GM12878 (cell line): ENCODE measurements at regions of chr2 and their contacts with region 1.

Region 1: GRCh38 chr2:187453078-187453641 is 5.1 kb upstream of the CALCRL start:
- DNase-seq: no peak
- ATAC-seq: 0 out of 3 replicates have a peak, but pooled peaks have one; percentile 11
- H3K4me3 ChIP-seq: no peak overlapping the region
- H3K27ac ChIP-seq: no peak overlapping the region
- H3K4me1 ChIP-seq: no peaks in the 10 kb centered on the region
- H3K27me3 ChIP-seq: no peaks in the 10 kb centered on the region
- CTCF ChIP-seq: peak; percentile 8 to 67 (median 27); a peak in 4 of 6 replicates
- EP300 ChIP-seq: no peak
- POLR2A ChIP-seq: no peak
- RAD21 ChIP-seq: peak; percentile 81

Region 2: DNA sequence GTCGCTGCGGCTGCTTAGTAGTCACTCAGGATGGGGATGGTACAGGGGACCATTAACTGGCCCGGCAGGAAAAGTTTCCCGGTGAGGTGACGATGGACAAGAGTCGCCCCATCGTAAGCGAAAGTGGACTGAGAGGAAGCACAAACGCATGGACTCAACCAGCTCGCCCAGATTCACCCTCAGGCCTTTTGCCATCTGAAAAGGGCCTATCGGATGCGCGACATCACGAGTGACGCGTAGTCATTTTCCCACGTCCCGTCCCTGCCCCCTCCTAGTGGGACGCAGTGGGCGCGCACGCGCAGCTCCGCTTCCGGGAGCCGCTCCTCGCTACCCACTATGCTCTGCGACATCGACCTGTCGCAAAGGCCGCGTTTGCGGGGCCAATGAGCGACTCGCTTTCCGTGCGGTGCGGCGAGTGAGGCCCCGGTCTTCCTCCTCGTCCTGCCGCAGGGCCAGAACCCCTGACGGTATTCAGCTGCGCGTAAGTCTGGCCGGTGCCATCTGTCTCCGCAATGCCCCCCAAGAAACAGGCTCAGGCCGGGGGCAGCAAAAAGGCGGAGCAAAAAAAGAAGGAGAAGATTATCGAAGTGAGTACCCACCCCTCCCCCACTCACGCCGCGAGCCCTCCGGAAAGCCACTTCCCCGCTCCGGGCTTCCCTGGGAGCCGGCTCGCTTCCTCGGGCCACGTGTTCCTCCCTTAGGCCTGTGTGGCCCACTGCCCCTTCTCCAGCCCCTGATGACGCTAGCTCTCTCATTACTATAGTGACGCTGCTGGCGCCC is 967.1 kb before region 1 on chr2 and contains the start of gene ZC3H15:
- CTCF ChIA-PET with region 1: no interaction called
- POLR2A ChIA-PET with region 1: no interaction called
- RAD21 ChIA-PET with region 1: interaction called, 3 read pairs
- SMC1A ChIA-PET with region 1: no interaction called
- in situ Hi-C with region 1: loop called (anchors 25 kb)
- intact Hi-C with region 1: no loop called
- DNase-seq: peak; percentile 97
- ATAC-seq: peak; percentile 79
- H3K4me3 ChIP-seq: peak within 1 kb of the TSS; percentile 86
- H3K27ac ChIP-seq: peak within 1 kb of the TSS; percentile 97
- H3K4me1 ChIP-seq: 0 out of 2 replicates have a peak, but pooled peaks cover 4% of the 10 kb centered on the region
- H3K27me3 ChIP-seq: no peaks in the 10 kb centered on the region
- CTCF ChIP-seq: no peak
- EP300 ChIP-seq: no peak
- POLR2A ChIP-seq: peak; percentile 97
- RAD21 ChIP-seq: no peak
- polyA plus RNA-seq, gene ZC3H15: 115 to 122 TPM

Region 3: GRCh38 chr2:186903216-186903615 is 549.9 kb before region 1 on chr2:
- CTCF ChIA-PET with region 1: interaction called, 20 read pairs
- POLR2A ChIA-PET with region 1: no interaction called
- RAD21 ChIA-PET with region 1: interaction called, 18 read pairs
- SMC1A ChIA-PET with region 1: interaction called, 25 read pairs
- in situ Hi-C with region 1: no loop called
- intact Hi-C with region 1: loop called (anchors 2 kb)
- DNase-seq: no peak
- ATAC-seq: no peak
- H3K4me3 ChIP-seq: no peak overlapping the region
- H3K27ac ChIP-seq: no peak overlapping the region
- H3K4me1 ChIP-seq: no peaks in the 10 kb centered on the region
- H3K27me3 ChIP-seq: no peaks in the 10 kb centered on the region
- CTCF ChIP-seq: peak in 2 of 3 experiments; percentile 8 to 34; a peak in 2 of 6 replicates
- EP300 ChIP-seq: no peak
- POLR2A ChIP-seq: no peak
- RAD21 ChIP-seq: peak; percentile 45

Region 4: GRCh38 chr2:187138265-187138664 is 314.9 kb before region 1 on chr2:
- CTCF ChIA-PET with region 1: interaction called, 23 read pairs
- POLR2A ChIA-PET with region 1: interaction called, 3 read pairs
- RAD21 ChIA-PET with region 1: interaction called, 35 read pairs
- SMC1A ChIA-PET with region 1: interaction called, 24 read pairs
- in situ Hi-C with region 1: loop called (anchors 10 kb)
- intact Hi-C with region 1: loop called (anchors 1 kb)
- DNase-seq: no peak
- ATAC-seq: peak; percentile 91
- H3K4me3 ChIP-seq: no peak overlapping the region
- H3K27ac ChIP-seq: no peak overlapping the region
- H3K4me1 ChIP-seq: no peaks in the 10 kb centered on the region
- H3K27me3 ChIP-seq: no peaks in the 10 kb centered on the region
- CTCF ChIP-seq: peak; percentile 54 to 67 (median 65)
- EP300 ChIP-seq: no peak
- POLR2A ChIP-seq: no peak
- RAD21 ChIP-seq: peak; percentile 77

Region 5: GRCh38 chr2:187299122-187299906 is 153.8 kb before region 1 on chr2:
- CTCF ChIA-PET with region 1: interaction called, 31 read pairs
- POLR2A ChIA-PET with region 1: interaction called, 3 read pairs
- RAD21 ChIA-PET with region 1: interaction called, 16 read pairs
- SMC1A ChIA-PET with region 1: interaction called, 10 read pairs
- in situ Hi-C with region 1: no loop called
- intact Hi-C with region 1: loop called (anchors 1 kb)
- DNase-seq: no peak
- ATAC-seq: peak; percentile 79
- H3K4me3 ChIP-seq: no peak overlapping the region
- H3K27ac ChIP-seq: no peak overlapping the region
- H3K4me1 ChIP-seq: no peaks in the 10 kb centered on the region
- H3K27me3 ChIP-seq: no peaks in the 10 kb centered on the region
- CTCF ChIP-seq: peak; percentile 32 to 49 (median 38); a peak in 4 of 6 replicates
- EP300 ChIP-seq: no peak
- POLR2A ChIP-seq: no peak
- RAD21 ChIP-seq: peak; percentile 69

Region 6: DNA sequence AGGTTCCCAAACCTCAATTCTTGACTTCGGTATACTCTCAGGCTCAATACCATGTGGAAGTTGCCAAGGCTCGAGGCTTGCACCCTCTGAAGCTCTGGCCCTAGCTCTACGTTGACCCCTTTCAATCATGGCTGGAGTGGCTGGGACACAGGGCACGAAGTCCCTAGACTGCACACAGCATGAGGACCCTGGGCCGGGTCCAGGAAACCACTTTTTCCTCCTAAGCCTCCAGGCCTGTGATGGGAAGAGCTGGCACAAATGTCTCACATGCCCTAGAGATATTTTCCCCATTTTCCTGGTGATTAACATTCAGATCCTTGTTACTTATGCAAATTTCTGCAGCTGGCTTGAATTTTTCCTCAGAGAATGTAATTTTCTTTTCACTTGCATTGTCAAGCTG is 40.0 kb after region 1 on chr2:
- CTCF ChIA-PET with region 1: no interaction called
- POLR2A ChIA-PET with region 1: no interaction called
- RAD21 ChIA-PET with region 1: no interaction called
- SMC1A ChIA-PET with region 1: no interaction called
- in situ Hi-C with region 1: no loop called
- intact Hi-C with region 1: no loop called
- DNase-seq: no peak
- ATAC-seq: no peak
- H3K4me3 ChIP-seq: no peak overlapping the region
- H3K27ac ChIP-seq: no peak overlapping the region
- H3K4me1 ChIP-seq: no peaks in the 10 kb centered on the region
- H3K27me3 ChIP-seq: no peaks in the 10 kb centered on the region
- CTCF ChIP-seq: no peak
- EP300 ChIP-seq: no peak
- POLR2A ChIP-seq: no peak
- RAD21 ChIP-seq: no peak